ENCODE measurements at regions of chr1 and their contacts with region 1.

Region 1: DNA sequence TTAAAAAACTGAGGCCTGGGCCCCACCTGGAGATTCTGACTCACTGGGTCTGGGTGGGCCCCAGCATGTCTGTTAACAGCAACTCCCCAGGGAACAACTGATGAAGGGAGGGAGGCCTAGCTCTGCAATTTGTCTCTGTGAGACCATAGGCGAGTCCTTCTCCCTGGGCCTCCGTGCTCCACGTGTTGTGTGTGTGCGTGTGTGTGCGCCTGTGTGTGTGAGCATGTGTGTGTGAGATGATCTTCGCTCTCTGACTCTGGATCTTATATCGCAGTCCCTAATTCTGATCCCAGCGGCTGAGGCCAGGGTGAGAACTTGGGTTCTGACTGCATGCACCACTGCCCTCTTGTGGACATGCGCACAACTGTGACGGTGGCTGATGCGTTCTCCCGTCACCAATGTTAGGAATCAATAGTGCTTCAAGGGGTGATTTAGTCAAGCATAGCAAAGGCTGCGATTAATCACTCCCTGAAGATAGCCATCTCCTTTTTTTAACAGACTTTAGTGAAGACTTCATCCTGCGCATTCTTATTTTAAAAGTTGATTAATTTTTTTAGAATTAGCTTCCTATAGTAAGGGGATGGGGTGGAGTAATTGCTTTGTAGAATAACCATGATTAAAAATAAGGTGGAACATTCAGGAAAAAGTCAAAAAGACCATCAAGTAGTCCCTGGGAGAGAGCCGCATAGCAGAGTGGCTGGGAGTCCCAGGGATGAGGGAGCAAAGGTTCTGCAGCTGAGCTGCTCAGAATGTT is 62.4 kb upstream of the USP24 start:
- DNase-seq: peak; percentile 80 to 91 (median 82)
- ATAC-seq: peak; percentile 90
- H3K4me3 ChIP-seq: no peak overlapping the region
- H3K27ac ChIP-seq: peak overlapping the region; percentile 79; the same call in 2 of the 3 replicates
- H3K4me1 ChIP-seq: peaks cover 19 to 33% of the 10 kb centered on the region in 2 experiments
- H3K27me3 ChIP-seq: no peaks in the 10 kb centered on the region
- CTCF ChIP-seq: peak; percentile 86 to 93 (median 88)
- EP300 ChIP-seq: peak; percentile 1; the same call in 1 of the 2 replicates
- POLR2A ChIP-seq: no peak
- RAD21 ChIP-seq: peak; percentile 87 to 96

Region 2: GRCh38 chr1:55071477-55071876 is 206.1 kb before region 1 on chr1:
- CTCF ChIA-PET with region 1: interaction called, 5 read pairs
- POLR2A ChIA-PET with region 1: no interaction called
- in situ Hi-C with region 1: no loop called
- intact Hi-C with region 1: loop called (anchors 1 kb)
- DNase-seq: peak; percentile 34 to 56 (median 34)
- ATAC-seq: peak; percentile 91
- H3K4me3 ChIP-seq: no peak overlapping the region
- H3K27ac ChIP-seq: no peak overlapping the region
- H3K4me1 ChIP-seq: no peaks in the 10 kb centered on the region
- H3K27me3 ChIP-seq: no peaks in the 10 kb centered on the region
- CTCF ChIP-seq: peak; percentile 52 to 70 (median 67)
- EP300 ChIP-seq: no peak
- POLR2A ChIP-seq: no peak
- RAD21 ChIP-seq: peak in 1 of 2 experiments; percentile 54; a peak in 2 of 4 replicates

Region 3: DNA sequence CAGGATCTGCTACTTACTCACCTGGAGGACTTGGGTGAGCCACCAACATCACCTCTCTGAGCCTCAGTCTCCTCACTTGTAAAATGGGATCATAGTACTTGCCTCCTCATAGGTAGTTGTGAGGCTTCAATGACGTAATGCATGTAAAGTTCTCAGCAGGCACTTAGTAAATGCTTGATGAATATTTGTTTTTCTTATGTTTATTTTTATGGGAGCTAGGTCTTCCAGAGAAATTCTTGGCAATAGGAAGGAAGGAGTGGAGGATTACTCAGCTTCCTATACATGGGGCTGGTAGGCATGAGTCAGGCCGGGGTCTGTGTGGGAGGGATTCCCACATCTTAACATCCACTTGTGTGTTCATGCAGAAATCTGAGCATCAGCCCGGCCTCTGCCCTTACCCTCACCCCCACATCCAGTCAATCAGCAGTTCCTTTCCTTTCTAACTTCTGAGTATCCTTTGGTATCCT is 33.0 kb after region 1 on chr1:
- CTCF ChIA-PET with region 1: no interaction called
- POLR2A ChIA-PET with region 1: no interaction called
- in situ Hi-C with region 1: no loop called
- intact Hi-C with region 1: no loop called
- DNase-seq: peak in 1 of 4 experiments; percentile 14
- ATAC-seq: no peak
- H3K4me3 ChIP-seq: no peak overlapping the region
- H3K27ac ChIP-seq: no peak overlapping the region
- H3K4me1 ChIP-seq: no peaks in the 10 kb centered on the region
- H3K27me3 ChIP-seq: peaks cover 3 to 44% of the 10 kb centered on the region in 2 experiments; a peak in 4 of 5 replicates
- CTCF ChIP-seq: no peak
- EP300 ChIP-seq: no peak
- POLR2A ChIP-seq: no peak
- RAD21 ChIP-seq: no peak

Region 4: GRCh38 chr1:55321942-55322341 is 44.4 kb after region 1 on chr1:
- CTCF ChIA-PET with region 1: no interaction called
- POLR2A ChIA-PET with region 1: no interaction called
- in situ Hi-C with region 1: no loop called
- intact Hi-C with region 1: no loop called
- DNase-seq: no peak
- ATAC-seq: no peak
- H3K4me3 ChIP-seq: no peak overlapping the region
- H3K27ac ChIP-seq: no peak overlapping the region
- H3K4me1 ChIP-seq: no peaks in the 10 kb centered on the region
- H3K27me3 ChIP-seq: peaks cover 13 to 44% of the 10 kb centered on the region in 2 experiments; a peak in 4 of 5 replicates
- CTCF ChIP-seq: no peak
- EP300 ChIP-seq: no peak
- POLR2A ChIP-seq: no peak
- RAD21 ChIP-seq: no peak